Prostate gland (tissue), 2 donors: ENCODE measurements at regions of chr1 and their contacts with region 1.

Region 1: DNA sequence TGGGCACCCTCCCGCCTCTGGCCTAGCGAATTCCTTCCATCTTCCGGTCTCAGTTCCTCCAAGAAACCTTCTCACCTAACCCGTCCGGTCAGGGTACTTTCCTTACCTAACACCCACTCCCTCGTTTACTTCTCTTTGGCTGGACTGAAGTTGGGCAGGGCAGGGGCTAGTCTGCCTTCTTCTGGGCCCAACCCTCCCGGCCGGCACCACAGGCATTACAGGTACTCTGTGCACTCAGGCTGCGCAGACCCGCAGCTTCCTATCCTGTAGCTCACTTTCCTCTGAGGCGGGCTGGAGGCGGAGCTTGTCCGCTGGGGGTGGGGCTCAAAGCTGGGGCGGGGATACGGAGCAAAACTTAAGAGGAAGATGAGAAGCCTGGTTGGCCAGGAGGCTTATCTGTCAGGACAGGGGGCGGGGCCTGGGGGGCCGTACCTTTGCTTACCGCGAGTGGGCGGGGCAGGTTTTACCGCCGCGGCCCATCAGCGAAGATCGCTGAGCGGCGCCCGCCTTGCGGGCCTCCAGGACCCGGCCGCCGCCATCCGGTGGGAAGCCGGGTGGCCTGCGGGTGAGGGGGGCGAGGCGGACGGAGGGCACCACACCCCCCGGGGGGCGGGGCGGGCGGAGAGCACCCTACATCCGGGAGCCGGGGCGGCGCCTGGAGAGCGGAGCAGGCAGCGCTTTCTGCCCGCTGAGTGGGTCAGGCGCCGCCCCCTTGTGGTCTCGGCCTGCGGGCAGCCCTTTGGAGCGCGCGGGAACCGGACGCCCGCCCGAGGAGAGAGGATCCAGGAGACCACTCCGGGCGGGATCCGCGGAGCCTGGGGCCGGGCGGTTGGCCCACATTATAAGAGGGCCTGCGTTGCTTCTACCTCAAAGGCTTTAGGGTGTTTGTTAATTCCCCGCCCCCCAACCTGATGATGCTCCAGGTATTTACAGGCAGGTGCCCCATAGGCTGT is 31.9 kb downstream of the ZNF648 start:
- DNase-seq: peak; percentile 99
- H3K4me3 ChIP-seq: peak overlapping the region; percentile 55 to 63
- H3K27ac ChIP-seq: peak overlapping the region; percentile 93 to 94
- H3K4me1 ChIP-seq: no peaks in the 10 kb centered on the region
- H3K27me3 ChIP-seq: no peaks in the 10 kb centered on the region
- CTCF ChIP-seq: peak in 3 of 4 experiments; percentile 55 to 70 (median 64)
- POLR2A ChIP-seq: peak; percentile 78

Region 2: GRCh38 chr1:181033799-181034451 is 995.7 kb before region 1 on chr1 and contains the start of gene MR1:
- intact Hi-C with region 1: loop called (anchors 10 kb)
- DNase-seq: peak; percentile 58
- H3K4me3 ChIP-seq: peak within 1 kb of the TSS; percentile 32 to 40
- H3K27ac ChIP-seq: peak within 1 kb of the TSS; percentile 91 to 96
- H3K4me1 ChIP-seq: peaks cover 6% of the 10 kb centered on the region
- H3K27me3 ChIP-seq: no peaks in the 10 kb centered on the region
- CTCF ChIP-seq: no peak
- POLR2A ChIP-seq: peak; percentile 85
- total RNA-seq, gene MR1: 14.3 to 17.5 TPM

Region 3: DNA sequence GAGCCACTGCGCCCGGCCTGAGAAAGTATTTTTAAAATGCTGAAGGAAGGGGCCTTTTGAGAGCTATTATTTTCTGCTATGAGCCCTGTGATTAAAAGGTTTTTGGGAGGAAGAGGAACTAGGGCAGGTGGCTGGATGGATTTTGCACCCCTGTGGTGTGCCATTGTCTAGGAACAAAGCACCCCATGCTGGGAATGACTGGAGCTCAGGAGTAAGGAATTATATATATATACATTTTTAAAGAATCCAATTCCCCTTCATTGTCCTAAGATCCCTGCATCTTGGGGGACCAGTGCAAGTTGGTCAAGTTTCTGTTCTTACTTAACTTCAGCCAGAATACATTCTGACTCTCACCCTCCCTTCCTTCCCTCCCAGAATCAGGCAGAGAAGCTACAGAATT is 59.8 kb before region 1 on chr1:
- intact Hi-C with region 1: no loop called
- DNase-seq: no peak
- H3K4me3 ChIP-seq: no peak overlapping the region
- H3K27ac ChIP-seq: no peak overlapping the region
- H3K4me1 ChIP-seq: no peaks in the 10 kb centered on the region
- H3K27me3 ChIP-seq: no peaks in the 10 kb centered on the region
- CTCF ChIP-seq: no peak
- POLR2A ChIP-seq: no peak

Region 4: DNA sequence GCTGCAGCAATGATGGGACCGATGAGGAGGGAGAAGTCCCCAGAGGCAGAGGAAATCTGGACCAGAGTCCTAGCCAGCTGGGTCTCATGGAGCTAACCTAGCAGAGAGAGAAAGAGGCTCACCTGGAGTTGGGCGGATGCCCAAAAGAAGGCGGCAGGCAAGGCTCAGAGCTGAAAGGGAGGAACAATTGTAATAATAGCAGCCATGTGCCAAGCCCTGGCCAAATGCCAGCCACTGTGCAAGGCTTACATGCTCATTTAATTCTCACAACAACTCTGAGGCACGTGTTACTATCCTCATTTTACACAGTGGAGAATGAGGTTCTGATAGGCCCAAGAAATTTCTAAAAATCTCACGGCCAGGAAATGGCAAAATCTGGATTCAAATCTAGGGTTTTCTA is 81.8 kb after region 1 on chr1:
- intact Hi-C with region 1: no loop called
- DNase-seq: no peak
- H3K4me3 ChIP-seq: no peak overlapping the region
- H3K27ac ChIP-seq: no peak overlapping the region
- H3K4me1 ChIP-seq: no peaks in the 10 kb centered on the region
- H3K27me3 ChIP-seq: no peaks in the 10 kb centered on the region
- CTCF ChIP-seq: no peak
- POLR2A ChIP-seq: no peak

Region 5: DNA sequence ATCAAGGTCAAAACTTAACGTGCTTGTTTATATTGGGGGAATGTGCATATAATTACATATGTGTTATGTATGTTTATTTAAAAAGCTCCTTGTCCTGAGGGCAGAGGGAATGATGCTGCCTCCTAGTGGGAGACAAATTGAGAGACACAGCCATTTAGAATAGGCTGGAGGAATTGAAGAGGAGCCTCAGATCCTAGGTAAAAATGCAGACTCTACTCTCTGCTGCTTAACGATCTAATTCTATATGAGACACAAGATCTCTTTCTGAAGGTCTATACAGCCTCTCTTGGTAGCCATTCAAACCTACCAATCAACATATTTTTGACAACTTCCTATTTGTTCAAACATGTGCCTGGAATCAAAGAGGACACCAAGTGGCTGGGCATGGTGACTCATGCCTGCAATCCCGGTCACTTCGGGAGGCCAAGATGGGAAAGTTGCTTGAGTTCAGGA is 168.4 kb after region 1 on chr1:
- intact Hi-C with region 1: no loop called
- DNase-seq: no peak
- H3K4me3 ChIP-seq: no peak overlapping the region
- H3K27ac ChIP-seq: no peak overlapping the region
- H3K4me1 ChIP-seq: no peaks in the 10 kb centered on the region
- H3K27me3 ChIP-seq: no peaks in the 10 kb centered on the region
- CTCF ChIP-seq: no peak
- POLR2A ChIP-seq: no peak